Heart right ventricle (tissue), 16 donors: ENCODE measurements at regions of chr20 and their contacts with region 1.

Region 1: DNA sequence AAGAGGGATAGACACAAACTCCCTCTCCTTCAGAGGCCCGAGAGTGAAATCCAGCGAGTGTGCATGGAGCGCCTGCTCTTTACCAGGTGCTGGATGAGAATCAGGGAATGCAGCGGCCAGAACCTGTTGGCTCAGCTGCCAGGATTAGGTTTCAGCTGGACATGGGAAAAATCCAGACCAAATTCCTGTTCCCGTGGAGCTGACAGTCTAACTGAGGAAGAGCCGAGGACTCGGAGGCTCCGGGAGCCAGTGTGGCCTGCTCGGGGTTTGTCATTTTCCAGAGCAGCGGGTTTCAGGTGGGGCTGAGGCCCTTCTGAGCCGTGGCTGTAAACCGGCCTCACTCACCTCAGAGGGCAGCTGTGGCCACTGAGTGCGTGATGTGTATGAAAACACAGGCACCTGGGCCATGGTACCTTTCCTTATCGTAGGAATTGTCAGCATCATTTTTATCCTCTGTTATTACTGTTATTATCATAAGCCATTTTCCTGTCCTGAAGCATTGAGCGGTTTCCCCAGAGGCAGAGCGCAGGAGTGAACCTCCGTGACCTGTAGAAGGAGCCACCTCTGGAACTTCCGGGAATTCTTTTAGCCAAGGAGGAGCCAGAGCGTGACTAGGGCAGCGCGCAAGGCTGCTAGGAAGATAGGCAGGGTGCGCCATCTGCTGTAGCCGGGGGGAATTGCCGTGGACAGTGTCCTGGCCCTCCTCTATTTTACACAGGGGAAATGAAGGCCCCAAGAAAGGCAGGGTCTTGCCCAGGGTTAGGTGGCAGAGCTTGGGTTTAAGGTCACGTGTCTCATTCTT is 27.3 kb downstream of the PKIG start:
- DNase-seq: peak; percentile 91 to 92
- ATAC-seq: peak; percentile 87 to 94 (median 93)
- H3K4me3 ChIP-seq: peak overlapping the region in 7 of 10 donors; percentile 25 to 47 (median 32)
- H3K27ac ChIP-seq: peak overlapping the region; percentile 83 to 92 (median 87)
- H3K4me1 ChIP-seq: peaks cover 18 to 77% (median 55%) of the 10 kb centered on the region in 9 donors
- H3K27me3 ChIP-seq: no peaks in the 10 kb centered on the region
- CTCF ChIP-seq: peak; percentile 95 to 99 (median 97)

Region 2: GRCh38 chr20:44210422-44211176 is 399.1 kb before region 1 on chr20 and contains the start of gene OSER1:
- intact Hi-C with region 1: loop called in 7 of 10 experiments (anchors 5 to 10 kb)
- DNase-seq: peak; percentile 97
- ATAC-seq: peak; percentile 93 to 97 (median 96)
- H3K4me3 ChIP-seq: peak within 1 kb of the TSS; percentile 73 to 99 (median 93)
- H3K27ac ChIP-seq: peak within 1 kb of the TSS; percentile 87 to 99 (median 94)
- H3K4me1 ChIP-seq: peaks cover 0 to 66% (median 50%) of the 10 kb centered on the region in 9 donors
- H3K27me3 ChIP-seq: no peaks in the 10 kb centered on the region
- CTCF ChIP-seq: no peak
- total RNA-seq, gene OSER1: 22.6 to 37.3 (median 31.3) TPM

Region 3: DNA sequence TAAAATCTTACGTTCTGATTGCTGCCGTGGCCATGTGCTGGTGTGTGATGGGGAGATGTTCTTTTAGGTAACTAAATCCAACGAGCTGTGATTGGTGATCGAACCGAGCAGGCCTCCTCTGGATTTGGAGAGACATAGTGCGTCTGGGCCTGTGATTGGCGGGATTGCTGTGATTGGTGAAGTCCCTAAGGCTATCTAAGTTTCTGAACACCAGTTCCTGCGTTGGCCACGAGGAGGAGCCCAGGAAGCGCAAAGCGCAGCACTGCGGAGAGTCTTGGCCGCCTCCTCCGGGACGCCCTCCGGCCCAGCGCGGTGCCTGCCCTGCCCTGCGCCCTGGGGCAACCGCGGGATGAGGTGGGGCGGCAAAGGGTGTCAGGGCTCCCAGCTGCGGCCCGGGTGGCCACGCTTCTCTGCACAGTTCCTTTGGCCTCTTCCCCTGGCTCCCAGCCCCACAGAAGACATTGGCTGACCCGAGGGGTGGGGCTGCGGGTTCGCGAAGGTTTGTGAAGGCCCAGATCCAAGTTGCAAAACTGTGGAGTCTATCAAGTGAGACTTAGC is 221.2 kb before region 1 on chr20:
- intact Hi-C with region 1: loop called in 8 of 10 experiments (anchors 2 to 10 kb)
- DNase-seq: peak; percentile 33 to 68
- ATAC-seq: peak in 7 of 8 donors; percentile 50 to 80 (median 70)
- H3K4me3 ChIP-seq: no peak overlapping the region
- H3K27ac ChIP-seq: no peak overlapping the region
- H3K4me1 ChIP-seq: peaks cover 0 to 6% (median 0%) of the 10 kb centered on the region in 9 donors
- H3K27me3 ChIP-seq: peaks cover 0 to 27% (median 18%) of the 10 kb centered on the region in 7 donors
- CTCF ChIP-seq: peak; percentile 35 to 80 (median 64)

Region 4: GRCh38 chr20:44475694-44476560 is 133.8 kb before region 1 on chr20 and contains the start of gene TTPAL:
- intact Hi-C with region 1: loop called in 5 of 10 experiments (anchors 5 kb)
- DNase-seq: peak; percentile 85 to 89
- ATAC-seq: peak; percentile 97 to 99 (median 98)
- H3K4me3 ChIP-seq: peak within 1 kb of the TSS; percentile 43 to 82 (median 70)
- H3K27ac ChIP-seq: peak within 1 kb of the TSS; percentile 75 to 97 (median 89)
- H3K4me1 ChIP-seq: peaks cover 3 to 21% (median 12%) of the 10 kb centered on the region in 9 donors
- H3K27me3 ChIP-seq: no peaks in the 10 kb centered on the region
- CTCF ChIP-seq: peak in 7 of 9 donors; percentile 28 to 68 (median 42)
- total RNA-seq, gene TTPAL: 2.6 to 7.3 (median 4.7) TPM

Region 5: DNA sequence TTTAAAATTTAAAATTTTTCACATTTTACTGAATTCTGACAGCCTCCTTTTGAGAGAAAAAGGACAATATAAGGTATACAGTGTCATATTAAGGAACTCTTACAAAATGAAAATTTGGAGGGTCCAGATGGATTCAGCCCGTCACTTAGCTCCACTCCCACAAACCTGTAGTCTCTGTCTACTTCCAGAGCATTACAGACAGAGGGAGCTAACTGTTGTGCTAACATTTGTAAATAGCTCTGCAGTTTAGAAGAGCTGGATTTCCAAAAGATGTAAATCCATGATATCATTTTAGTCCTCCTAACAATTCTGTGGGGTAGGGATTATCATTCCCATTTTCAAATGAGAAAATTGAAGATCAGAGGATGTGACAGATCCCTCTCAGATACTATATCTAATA is 71.7 kb before region 1 on chr20:
- intact Hi-C with region 1: loop called in 9 of 10 experiments (anchors 2 to 5 kb)
- DNase-seq: no peak
- ATAC-seq: peak in 4 of 8 donors; percentile 44 to 64 (median 48)
- H3K4me3 ChIP-seq: no peak overlapping the region
- H3K27ac ChIP-seq: no peak overlapping the region
- H3K4me1 ChIP-seq: peaks cover 0 to 58% (median 28%) of the 10 kb centered on the region in 9 donors
- H3K27me3 ChIP-seq: no peaks in the 10 kb centered on the region
- CTCF ChIP-seq: peak in 6 of 9 donors; percentile 16 to 55 (median 48)

Region 6: DNA sequence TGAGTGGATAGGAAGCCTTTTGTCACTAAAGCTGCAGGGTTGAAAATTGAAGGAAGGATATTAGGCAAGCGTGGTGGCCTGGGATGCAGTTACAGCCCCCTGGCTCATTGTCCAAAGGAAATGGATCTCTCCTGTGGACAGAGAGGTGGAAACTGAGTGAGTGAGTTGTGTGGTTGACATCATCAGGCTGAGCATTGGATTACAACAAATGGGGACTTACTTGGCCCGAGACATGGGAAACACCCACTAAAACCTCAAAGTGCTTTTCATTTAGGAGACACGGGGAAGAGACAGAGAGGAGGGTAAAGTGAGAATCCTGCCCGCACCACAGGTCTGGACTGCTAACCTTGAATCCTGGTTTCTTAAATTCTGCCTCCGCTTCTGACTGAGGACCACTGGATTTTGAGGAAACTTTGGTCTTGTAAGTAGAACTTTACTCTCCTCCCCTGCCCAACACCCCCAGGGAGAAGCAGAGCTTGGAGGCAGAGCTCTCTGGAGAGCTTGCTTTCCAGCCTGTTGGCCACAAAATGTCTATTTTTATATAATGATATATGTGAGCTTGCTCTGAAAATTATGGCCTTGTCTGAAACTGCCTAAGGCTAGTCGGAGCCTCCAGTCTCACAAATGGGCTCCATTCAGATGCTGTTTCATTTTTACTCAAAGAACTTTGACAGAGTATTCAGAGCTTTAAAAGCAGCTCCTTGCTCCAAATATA is 27.2 kb before region 1 on chr20 and contains the start of gene PKIG:
- intact Hi-C with region 1: loop called in 6 of 10 experiments (anchors 2 to 5 kb)
- DNase-seq: peak in 1 of 2 donors; percentile 85
- ATAC-seq: peak; percentile 86 to 93 (median 90)
- H3K4me3 ChIP-seq: peak within 1 kb of the TSS; percentile 36 to 74 (median 62)
- H3K27ac ChIP-seq: peak within 1 kb of the TSS; percentile 87 to 98 (median 92)
- H3K4me1 ChIP-seq: peaks cover 18 to 87% (median 69%) of the 10 kb centered on the region in 9 donors
- H3K27me3 ChIP-seq: no peaks in the 10 kb centered on the region
- CTCF ChIP-seq: peak in 1 of 9 donors; percentile 9
- total RNA-seq, gene PKIG: 155 to 342 (median 231) TPM

Region 7: GRCh38 chr20:44683263-44684046 is 73.7 kb after region 1 on chr20:
- intact Hi-C with region 1: loop called in 1 of 10 experiments (anchors 10 kb)
- DNase-seq: no peak
- ATAC-seq: peak in 7 of 8 donors; percentile 43 to 75 (median 54)
- H3K4me3 ChIP-seq: no peak overlapping the region
- H3K27ac ChIP-seq: no peak overlapping the region
- H3K4me1 ChIP-seq: peaks cover 0 to 14% (median 6%) of the 10 kb centered on the region in 9 donors
- H3K27me3 ChIP-seq: peaks cover 0 to 4% (median 0%) of the 10 kb centered on the region in 7 donors
- CTCF ChIP-seq: peak in 8 of 9 donors; percentile 46 to 75 (median 56)

Region 8: DNA sequence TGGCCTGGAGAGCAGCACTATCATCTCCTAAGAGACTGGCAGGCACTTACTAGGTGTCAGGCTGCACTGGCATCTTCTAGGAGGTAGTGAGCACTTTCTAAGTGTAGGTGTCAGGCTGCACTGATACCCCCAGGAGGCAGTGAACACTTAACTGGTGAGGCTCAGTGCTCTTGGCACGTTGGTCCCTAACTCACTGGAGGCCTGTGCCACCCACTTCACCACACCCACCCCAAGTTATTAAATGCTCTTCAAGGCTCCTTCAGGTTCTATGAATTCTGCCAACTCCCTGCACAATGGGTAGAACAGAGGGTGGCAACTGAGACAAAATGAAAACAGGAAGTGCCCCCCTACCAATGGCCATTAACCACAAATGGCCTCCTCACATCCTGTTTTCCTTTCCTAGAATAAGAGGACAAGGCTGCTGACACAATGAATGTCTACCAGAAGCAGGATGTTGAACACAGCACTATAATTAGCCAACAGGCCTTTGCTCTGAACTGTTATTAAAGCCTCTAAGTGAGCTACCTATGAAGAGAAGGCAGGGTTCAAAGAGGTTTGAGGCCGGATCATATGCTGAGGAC is 1450.7 kb after region 1 on chr20:
- intact Hi-C with region 1: no loop called
- DNase-seq: no peak
- ATAC-seq: peak in 6 of 8 donors; percentile 21 to 62 (median 42)
- H3K4me3 ChIP-seq: no peak overlapping the region
- H3K27ac ChIP-seq: peak overlapping the region in 6 of 10 donors; percentile 6 to 74 (median 22)
- H3K4me1 ChIP-seq: peaks cover 12 to 56% (median 34%) of the 10 kb centered on the region in 9 donors
- H3K27me3 ChIP-seq: peaks cover 0 to 35% (median 19%) of the 10 kb centered on the region in 7 donors
- CTCF ChIP-seq: no peak